ENCODE measurements at regions of chr10 and their contacts with region 1.

Region 1: DNA sequence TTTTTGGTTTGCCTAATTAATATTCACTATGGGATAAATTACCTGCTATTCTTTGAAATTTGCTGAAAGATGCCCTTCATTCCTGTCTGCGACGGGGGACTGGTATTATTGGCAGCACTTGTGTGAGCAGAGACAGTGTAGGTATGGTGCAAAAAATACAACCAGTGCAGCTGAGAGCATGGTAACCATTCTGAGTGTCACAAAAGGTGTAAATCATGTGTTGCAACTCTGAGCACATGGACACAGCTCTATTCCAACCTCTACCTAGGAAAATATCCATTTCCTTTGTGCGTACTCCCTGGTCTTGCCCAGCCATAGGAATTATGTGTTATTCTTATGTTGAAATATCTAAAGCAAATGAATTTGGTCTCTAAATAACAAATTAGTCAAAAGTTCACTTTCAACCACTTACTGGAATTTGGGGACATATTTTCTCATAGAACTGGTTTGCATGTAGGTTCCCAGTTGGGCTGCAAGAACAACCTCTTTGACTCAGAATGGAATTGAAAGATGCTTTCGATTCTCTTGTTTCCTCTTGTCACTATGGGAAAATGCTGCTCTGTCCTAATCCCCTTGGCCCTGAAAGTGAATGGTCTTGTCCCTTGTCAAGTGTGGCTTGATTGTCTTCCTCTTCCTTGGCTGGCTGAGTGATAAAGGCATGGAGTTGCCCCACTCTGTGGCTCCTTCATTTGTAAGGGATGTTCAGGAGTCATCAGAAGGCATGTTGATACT is 57.0 kb downstream of the CELF2 start:
- DNase-seq: no peak

Region 2: DNA sequence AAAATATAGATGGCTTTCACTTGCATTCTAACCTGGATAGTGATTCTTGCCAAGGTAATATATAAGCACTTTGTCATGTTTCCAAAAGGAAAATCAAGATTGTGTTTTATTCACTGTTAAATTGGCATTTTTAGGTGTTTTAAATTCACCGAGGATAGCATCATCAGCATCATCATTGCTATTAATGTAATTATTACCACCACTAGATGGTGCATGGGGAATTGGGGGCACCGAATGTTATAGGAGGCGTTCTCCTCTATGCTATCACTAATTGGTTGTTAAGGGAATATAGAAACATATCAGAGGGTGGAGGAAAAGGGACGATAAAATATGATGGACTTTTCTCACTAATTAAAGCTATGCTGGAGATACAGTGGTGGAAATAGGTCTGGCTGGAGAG is 38.5 kb after region 1 on chr10:
- in situ Hi-C with region 1: loop called (anchors 5 kb)
- DNase-seq: no peak

Region 3: DNA sequence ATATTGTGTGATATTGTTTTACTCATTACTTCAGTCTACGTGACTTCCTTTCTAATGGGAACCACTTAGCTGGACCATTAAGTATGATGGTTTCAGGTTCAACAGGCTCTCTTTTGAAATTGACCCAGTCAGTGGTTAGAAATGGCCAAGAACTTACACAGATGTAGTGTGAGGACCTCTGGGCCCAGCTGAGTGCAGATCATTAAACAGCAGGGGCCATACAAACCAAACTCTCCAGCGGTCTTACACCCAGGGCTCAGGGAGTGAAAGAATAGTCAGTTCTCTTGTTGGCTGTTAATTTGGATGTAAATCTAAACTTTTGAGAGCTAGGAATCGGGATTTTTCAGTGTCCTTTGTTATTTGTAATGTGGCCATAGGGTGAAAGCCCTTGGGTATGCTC is 50.3 kb after region 1 on chr10:
- in situ Hi-C with region 1: no loop called
- DNase-seq: no peak

Region 4: GRCh38 chr10:11533328-11533781 is 458.7 kb after region 1 on chr10:
- in situ Hi-C with region 1: no loop called
- DNase-seq: no peak

Measured in G401 (cell line).